ENCODE measurements at regions of chr10 and their contacts with region 1.

Region 1: DNA sequence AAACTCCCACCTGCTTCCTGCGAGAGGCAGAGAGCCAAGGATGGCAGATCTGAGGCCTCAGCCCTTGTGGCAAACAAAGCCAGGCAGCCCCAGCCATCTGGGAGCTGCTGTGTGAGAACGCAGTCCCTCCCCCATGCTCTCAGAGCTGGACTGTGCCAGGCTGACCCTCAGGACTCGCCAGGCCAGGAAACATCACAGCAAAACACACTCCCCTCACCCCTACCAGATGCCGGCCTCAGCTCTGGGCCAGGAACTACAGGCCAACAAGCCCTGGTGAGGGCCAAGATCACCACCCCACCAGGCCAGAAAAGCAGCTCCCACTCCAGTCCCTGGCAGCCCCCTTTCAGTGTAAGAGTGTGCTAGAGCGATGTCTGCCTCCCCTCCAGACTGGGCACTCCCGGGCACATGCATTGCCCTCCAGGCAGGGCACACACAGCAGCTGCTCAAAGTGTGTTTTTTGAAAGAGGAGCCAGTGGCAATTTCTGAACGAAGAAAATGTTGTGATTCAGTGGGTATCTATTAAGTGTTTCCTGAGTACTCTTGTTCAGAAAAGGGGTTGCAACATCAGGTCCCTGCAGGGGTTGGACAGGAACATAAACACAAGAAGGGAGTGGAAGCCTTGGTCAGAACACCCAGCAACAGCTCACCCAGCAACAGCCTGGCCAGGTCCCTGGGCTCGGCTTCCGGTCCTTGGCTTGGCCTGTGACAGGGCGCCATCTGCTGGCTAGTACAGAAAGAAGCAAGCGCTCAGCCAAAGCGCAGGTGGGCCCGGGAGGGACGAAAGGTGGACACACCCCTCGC is 18.3 kb downstream of the LRRC20 start:
- DNase-seq: peak; percentile 94
- ATAC-seq: peak; percentile 98

Region 2: GRCh38 chr10:70267161-70267933 is 96.8 kb before region 1 on chr10:
- intact Hi-C with region 1: loop called (anchors 5 kb)
- DNase-seq: no peak
- ATAC-seq: no peak

Region 3: DNA sequence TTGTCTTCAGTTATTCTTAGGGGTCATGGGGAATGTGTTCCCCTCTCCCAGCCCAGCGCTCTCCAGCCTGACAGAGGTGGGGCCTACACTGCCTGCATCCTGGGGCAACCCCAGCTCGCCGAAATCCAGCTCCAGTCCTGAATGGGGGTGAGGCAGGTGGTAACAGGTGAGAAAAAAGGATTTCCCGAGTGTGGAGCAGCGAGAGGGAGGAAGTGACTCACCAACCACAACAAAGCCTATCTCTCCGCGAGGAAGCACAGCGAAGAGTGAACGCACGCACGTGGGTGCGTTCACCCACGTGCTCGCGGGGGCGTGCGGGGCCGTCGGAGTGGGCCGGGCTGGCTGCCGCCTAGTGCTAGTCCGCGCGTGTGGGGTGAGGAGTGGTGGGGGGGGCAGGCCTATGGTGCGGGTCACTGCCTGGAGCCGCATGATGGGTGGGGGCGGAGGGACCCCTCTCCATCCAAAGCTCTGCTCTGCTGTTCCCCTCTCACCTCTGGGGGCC is 113.5 kb after region 1 on chr10:
- intact Hi-C with region 1: no loop called
- DNase-seq: peak; percentile 52
- ATAC-seq: no peak

Region 4: DNA sequence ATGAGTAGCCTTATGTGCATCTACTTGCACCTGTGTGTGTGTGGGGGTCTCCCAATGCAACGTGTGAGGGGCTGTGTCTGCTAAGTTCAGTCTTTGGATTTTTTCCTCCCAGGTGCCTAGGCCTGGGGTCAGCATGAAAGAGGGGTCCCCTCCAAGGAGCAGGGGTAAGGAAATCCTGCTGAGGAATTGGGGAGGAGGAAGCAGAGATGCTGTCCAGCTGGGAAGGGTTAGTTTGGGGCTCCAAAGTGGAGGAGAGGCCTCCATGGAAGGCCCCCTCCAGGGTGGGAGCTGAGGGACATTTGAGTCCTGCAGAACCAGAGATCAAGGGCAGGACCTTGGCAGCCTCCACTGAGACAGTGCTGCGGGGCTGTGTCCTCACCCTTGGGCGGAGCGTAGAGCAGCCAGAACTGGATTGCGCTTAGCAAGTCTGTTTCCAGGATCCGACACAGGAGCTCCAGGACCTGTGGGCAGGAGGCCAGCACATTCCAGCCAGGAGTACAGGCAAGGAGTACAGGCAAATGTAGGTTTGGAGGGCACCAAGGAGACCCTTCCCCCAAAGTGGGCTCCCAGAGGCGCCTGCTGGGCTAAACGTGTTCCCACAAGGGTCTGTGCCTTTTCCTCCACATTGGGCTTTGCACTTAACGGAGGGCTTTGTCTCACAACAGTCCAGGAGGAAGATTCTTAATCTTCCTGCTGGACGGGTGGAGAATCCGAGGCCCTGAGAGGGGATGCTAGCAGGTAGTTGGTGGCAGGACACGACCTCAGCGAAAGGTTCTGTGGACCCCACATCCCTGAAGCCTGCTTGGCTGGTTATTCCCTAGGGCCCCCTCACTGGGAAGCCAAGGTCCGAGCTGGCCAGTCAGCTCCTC is 410.9 kb after region 1 on chr10:
- intact Hi-C with region 1: no loop called
- DNase-seq: peak; percentile 42
- ATAC-seq: no peak